Motor neuron (in vitro differentiated cells): ENCODE measurements at regions of chr7 and their contacts with region 1.

Region 1: GRCh38 chr7:29401769-29402168 is 161.9 kb upstream of the PRR15 start:
- ATAC-seq: no peak
- H3K4me3 ChIP-seq: no peak overlapping the region
- H3K27ac ChIP-seq: no peak overlapping the region
- H3K4me1 ChIP-seq: no peaks in the 10 kb centered on the region

Region 2: DNA sequence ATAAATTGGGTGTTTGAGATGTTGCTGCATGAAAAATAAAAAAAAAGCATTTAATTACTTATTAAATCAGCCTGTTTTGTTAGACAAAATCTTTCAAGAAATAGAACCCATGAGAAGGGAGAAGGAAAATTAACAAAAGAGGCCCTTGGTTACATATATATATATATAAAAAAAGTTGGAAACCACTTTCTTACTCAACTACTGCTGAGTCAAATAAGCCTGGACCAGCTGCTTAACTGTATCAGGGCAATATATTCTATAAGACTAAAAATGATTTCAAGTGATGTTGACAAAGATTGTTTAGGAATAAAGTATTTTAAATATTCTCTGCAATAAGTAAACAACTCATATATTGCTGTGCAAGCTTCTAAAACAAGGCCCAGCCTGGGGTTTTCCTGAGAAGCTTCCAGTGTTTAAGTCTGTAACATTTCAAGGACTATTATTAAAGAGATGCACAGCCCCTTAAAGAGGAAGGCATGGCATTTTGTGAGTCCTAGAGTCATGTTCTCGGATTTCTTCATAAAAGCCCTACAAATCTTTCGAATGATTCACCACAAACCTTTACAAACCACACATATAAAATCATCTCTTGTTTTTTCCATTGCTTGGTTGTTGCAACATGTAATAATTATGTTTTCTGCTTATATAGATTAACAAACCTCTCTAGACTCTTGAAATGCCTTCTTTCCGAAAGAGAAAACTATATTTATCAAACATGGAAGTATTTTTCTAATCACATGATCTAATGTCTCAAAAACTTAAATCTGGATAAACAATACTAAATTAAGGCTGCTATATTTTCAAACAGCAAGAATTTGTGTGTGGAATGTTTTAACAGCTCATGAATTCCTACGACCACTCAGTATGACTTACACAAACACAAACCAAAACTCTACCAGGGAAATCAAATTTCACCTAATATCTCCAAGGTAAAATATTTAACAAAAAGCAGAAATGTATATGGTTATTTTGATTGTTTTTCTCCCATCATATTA is 1235.5 kb before region 1 on chr7:
- in situ Hi-C with region 1: no loop called
- ATAC-seq: no peak
- H3K4me3 ChIP-seq: no peak overlapping the region
- H3K27ac ChIP-seq: no peak overlapping the region
- H3K4me1 ChIP-seq: no peaks in the 10 kb centered on the region

Region 3: DNA sequence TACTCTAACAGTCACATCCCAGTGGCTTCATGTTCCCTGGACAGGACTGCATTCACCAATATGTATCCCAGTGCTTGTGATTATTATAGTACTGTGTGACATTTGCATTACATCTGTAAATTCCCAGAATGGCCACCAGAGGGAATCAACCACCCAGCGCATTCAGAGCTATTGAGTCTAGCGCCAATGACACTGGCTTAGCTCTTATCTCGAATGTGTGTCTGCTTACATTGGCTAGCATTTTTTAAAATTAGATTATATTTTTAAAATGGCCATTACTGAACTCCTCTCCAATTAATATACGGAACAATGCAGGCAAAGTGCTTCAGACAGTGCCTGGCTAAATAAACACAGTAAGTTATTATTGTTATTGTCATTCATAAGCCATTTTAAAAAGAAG is 479.9 kb before region 1 on chr7:
- in situ Hi-C with region 1: loop called (anchors 5 to 25 kb)
- ATAC-seq: peak; percentile 90 to 96 (median 94)
- H3K4me3 ChIP-seq: no peak overlapping the region
- H3K27ac ChIP-seq: no peak overlapping the region
- H3K4me1 ChIP-seq: peaks cover 19 to 20% of the 10 kb centered on the region in 2 donors